CD8-positive, alpha-beta T cell (primary cell): ENCODE measurements at regions of chr10 and their contacts with region 1.

Region 1: GRCh38 chr10:63157845-63158624 is 24.9 kb downstream of the NRBF2 start:
- DNase-seq: peak in 8 of 9 experiments; percentile 13 to 88 (median 48)
- ATAC-seq: peak; percentile 74
- H3K4me3 ChIP-seq: no peak overlapping the region
- H3K4me3 Mint-ChIP-seq: no peak overlapping the region
- H3K27ac ChIP-seq: no peak overlapping the region
- H3K27ac Mint-ChIP-seq: no peak overlapping the region
- H3K4me1 ChIP-seq: no peaks in the 10 kb centered on the region
- H3K4me1 Mint-ChIP-seq: peaks cover 11% of the 10 kb centered on the region
- H3K27me3 ChIP-seq: no peaks in the 10 kb centered on the region
- H3K27me3 Mint-ChIP-seq: no peaks in the 10 kb centered on the region
- CTCF ChIP-seq: peak; percentile 79

Region 2: GRCh38 chr10:62050893-62051433 is 1107.1 kb before region 1 on chr10:
- CTCF ChIA-PET with region 1: no interaction called
- POLR2A ChIA-PET with region 1: no interaction called
- intact Hi-C with region 1: loop called in 1 of 2 experiments (anchors 10 kb)
- DNase-seq: peak; percentile 32 to 87 (median 57)
- ATAC-seq: peak; percentile 74
- H3K4me3 ChIP-seq: peak overlapping the region in 1 of 2 experiments; percentile 36
- H3K4me3 Mint-ChIP-seq: peak overlapping the region; percentile 74
- H3K27ac ChIP-seq: peak overlapping the region; percentile 14 to 73
- H3K27ac Mint-ChIP-seq: peak overlapping the region; percentile 86
- H3K4me1 ChIP-seq: peaks cover 38% of the 10 kb centered on the region
- H3K4me1 Mint-ChIP-seq: peaks cover 78% of the 10 kb centered on the region
- H3K27me3 ChIP-seq: no peaks in the 10 kb centered on the region
- H3K27me3 Mint-ChIP-seq: no peaks in the 10 kb centered on the region
- CTCF ChIP-seq: no peak

Region 3: GRCh38 chr10:62492012-62492869 is 665.8 kb before region 1 on chr10:
- CTCF ChIA-PET with region 1: interaction called, 11 read pairs
- POLR2A ChIA-PET with region 1: no interaction called
- intact Hi-C with region 1: loop called in 1 of 2 experiments (anchors 1 kb)
- DNase-seq: peak in 3 of 9 experiments; percentile 5 to 56 (median 31)
- ATAC-seq: peak; percentile 57
- H3K4me3 ChIP-seq: no peak overlapping the region
- H3K4me3 Mint-ChIP-seq: no peak overlapping the region
- H3K27ac ChIP-seq: no peak overlapping the region
- H3K27ac Mint-ChIP-seq: no peak overlapping the region
- H3K4me1 ChIP-seq: no peaks in the 10 kb centered on the region
- H3K4me1 Mint-ChIP-seq: peaks cover 5% of the 10 kb centered on the region
- H3K27me3 ChIP-seq: no peaks in the 10 kb centered on the region
- H3K27me3 Mint-ChIP-seq: peaks cover 5% of the 10 kb centered on the region
- CTCF ChIP-seq: peak; percentile 55

Region 4: DNA sequence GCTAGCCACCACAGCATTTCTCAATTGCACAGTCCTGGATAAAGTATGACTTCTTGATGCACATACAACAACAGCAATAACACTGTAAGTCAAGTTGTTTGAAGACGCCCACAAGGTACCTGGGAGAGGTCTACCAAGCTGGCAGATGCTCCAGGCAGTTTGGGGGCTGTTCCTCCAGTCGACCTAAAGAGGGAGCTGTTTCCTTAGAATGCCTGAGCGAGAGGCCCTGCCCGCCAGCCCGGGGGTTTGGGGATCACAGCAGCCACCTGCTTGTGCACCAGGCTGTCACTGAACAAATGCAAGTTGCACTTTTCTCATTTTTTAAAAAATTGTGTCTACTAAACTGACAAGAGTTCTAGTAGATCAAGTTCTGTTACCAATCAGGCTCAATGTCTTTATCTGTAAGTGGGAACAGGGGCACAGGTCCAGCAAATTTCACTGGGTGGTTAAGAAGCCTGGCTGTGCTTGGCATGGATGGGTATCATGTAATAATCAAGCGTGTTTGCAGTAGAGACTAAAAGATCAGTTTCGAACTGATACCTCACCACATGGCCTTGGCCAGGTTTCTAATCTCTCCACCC is 547.3 kb before region 1 on chr10:
- CTCF ChIA-PET with region 1: interaction called, 16 read pairs
- POLR2A ChIA-PET with region 1: no interaction called
- intact Hi-C with region 1: loop called (anchors 1 kb)
- DNase-seq: peak; percentile 48 to 84 (median 70)
- ATAC-seq: peak; percentile 97
- H3K4me3 ChIP-seq: no peak overlapping the region
- H3K4me3 Mint-ChIP-seq: no peak overlapping the region
- H3K27ac ChIP-seq: no peak overlapping the region
- H3K27ac Mint-ChIP-seq: no peak overlapping the region
- H3K4me1 ChIP-seq: no peaks in the 10 kb centered on the region
- H3K4me1 Mint-ChIP-seq: peaks cover 3% of the 10 kb centered on the region
- H3K27me3 ChIP-seq: no peaks in the 10 kb centered on the region
- H3K27me3 Mint-ChIP-seq: no peaks in the 10 kb centered on the region
- CTCF ChIP-seq: peak; percentile 89

Region 5: DNA sequence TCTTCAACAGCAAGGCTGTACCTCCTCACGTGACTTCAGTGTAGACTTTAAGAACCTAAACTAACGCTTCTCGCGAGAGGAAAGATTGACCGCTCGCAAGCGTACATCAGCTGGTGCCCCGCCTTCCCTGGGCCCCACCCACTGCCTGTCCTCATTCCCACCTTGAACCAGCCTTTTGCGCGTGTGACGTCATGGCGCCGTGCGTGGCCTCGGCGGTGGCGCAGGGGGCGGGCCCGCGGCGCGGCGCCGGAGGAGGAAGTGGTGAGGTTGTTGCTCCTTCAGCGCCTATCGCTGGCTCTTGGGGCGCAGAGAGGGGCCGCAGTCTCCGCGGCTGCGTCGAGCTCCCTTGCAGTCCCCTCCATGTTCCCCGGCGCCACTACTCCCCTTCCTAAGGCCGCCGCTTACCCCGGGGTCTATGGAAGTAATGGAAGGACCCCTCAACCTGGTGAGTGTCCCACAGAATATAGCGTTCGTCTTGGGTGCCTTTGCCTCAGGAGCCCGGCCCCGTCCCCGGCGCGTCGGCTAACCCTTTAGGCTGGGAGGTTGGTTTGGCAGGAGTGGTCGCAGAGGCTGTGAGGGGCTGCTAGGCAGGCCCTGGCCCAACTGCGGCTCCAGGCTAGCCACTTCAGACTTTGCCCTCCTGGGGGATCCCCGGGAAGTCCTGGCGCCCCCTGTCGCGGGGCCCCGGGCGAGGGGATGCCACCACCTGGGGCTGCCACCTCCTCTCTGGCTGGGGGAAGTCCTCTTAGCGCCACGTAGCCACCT is 24.8 kb before region 1 on chr10 and contains the start of gene NRBF2:
- CTCF ChIA-PET with region 1: interaction called, 14 read pairs
- POLR2A ChIA-PET with region 1: interaction called, 3 read pairs
- intact Hi-C with region 1: no loop called
- DNase-seq: peak; percentile 94 to 99 (median 97)
- ATAC-seq: peak; percentile 91
- H3K4me3 ChIP-seq: peak within 1 kb of the TSS; percentile 96 to 97
- H3K4me3 Mint-ChIP-seq: peak within 1 kb of the TSS; percentile 91
- H3K27ac ChIP-seq: peak within 1 kb of the TSS; percentile 96 to 98
- H3K27ac Mint-ChIP-seq: peak within 1 kb of the TSS; percentile 97
- H3K4me1 ChIP-seq: peaks cover 41% of the 10 kb centered on the region
- H3K4me1 Mint-ChIP-seq: peaks cover 37% of the 10 kb centered on the region
- H3K27me3 ChIP-seq: no peaks in the 10 kb centered on the region
- H3K27me3 Mint-ChIP-seq: peaks cover 5% of the 10 kb centered on the region
- CTCF ChIP-seq: peak; percentile 22
- total RNA-seq, gene NRBF2: 26.6 to 29.1 TPM

Region 6: GRCh38 chr10:63720072-63720537 is 562.1 kb after region 1 on chr10:
- CTCF ChIA-PET with region 1: interaction called, 268 read pairs
- POLR2A ChIA-PET with region 1: interaction called, 3 read pairs
- intact Hi-C with region 1: no loop called
- DNase-seq: peak; percentile 4 to 73 (median 46)
- ATAC-seq: peak; percentile 87
- H3K4me3 ChIP-seq: no peak overlapping the region
- H3K4me3 Mint-ChIP-seq: no peak overlapping the region
- H3K27ac ChIP-seq: no peak overlapping the region
- H3K27ac Mint-ChIP-seq: no peak overlapping the region
- H3K4me1 ChIP-seq: no peaks in the 10 kb centered on the region
- H3K4me1 Mint-ChIP-seq: peaks cover 4% of the 10 kb centered on the region
- H3K27me3 ChIP-seq: peaks cover 0 to 6% of the 10 kb centered on the region in 2 experiments
- H3K27me3 Mint-ChIP-seq: peaks cover 15% of the 10 kb centered on the region
- CTCF ChIP-seq: peak; percentile 100